Mammary epithelial cell (primary cell): ENCODE measurements at regions of chr12 and their contacts with region 1.

Region 1: DNA sequence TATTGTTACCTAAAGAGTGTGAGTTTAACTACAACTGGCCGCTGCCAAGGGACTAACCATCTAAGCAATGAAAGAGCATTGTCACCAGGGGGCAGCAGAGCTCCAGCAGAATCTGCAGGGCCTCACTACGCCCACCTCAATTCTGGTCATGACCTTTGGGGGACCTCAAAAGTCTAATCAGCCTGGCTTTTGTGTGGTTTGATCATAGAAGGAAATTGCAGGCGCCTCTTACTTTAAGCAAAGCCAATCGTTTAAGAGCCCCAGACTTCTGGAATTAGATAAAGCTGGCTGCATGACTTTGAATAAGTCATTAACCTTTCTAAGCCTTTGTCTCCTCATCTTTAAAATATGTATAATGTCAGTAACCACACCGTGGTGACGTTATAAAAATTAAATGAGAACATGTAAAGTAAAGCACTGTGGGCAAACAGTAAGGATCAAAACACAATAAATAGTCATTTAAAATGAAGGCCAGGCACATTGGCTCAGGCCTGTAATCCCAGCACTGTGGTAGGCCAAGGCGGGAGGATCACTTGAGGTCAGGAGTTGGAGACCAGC is 58.6 kb downstream of the TBX3 start:
- DNase-seq: peak; percentile 26
- H3K4me3 ChIP-seq: no peak overlapping the region
- H3K27ac ChIP-seq: no peak overlapping the region
- H3K4me1 ChIP-seq: peaks cover 3% of the 10 kb centered on the region
- H3K27me3 ChIP-seq: no peaks in the 10 kb centered on the region
- CTCF ChIP-seq: peak; percentile 90 to 93

Region 2: GRCh38 chr12:114368685-114369452 is 256.5 kb before region 1 on chr12:
- CTCF ChIA-PET with region 1: no interaction called
- dilution Hi-C with region 1: no loop called
- in situ Hi-C with region 1: no loop called
- intact Hi-C with region 1: no loop called
- DNase-seq: no peak
- H3K4me3 ChIP-seq: no peak overlapping the region
- H3K27ac ChIP-seq: no peak overlapping the region
- H3K4me1 ChIP-seq: no peaks in the 10 kb centered on the region
- H3K27me3 ChIP-seq: no peaks in the 10 kb centered on the region
- CTCF ChIP-seq: no peak

Region 3: GRCh38 chr12:114611145-114612018 is 14.0 kb before region 1 on chr12:
- CTCF ChIA-PET with region 1: interaction called, 13 read pairs
- dilution Hi-C with region 1: no loop called
- in situ Hi-C with region 1: no loop called
- intact Hi-C with region 1: no loop called
- DNase-seq: no peak
- H3K4me3 ChIP-seq: no peak overlapping the region
- H3K27ac ChIP-seq: no peak overlapping the region
- H3K4me1 ChIP-seq: no peaks in the 10 kb centered on the region
- H3K27me3 ChIP-seq: no peaks in the 10 kb centered on the region
- CTCF ChIP-seq: no peak

Region 4: DNA sequence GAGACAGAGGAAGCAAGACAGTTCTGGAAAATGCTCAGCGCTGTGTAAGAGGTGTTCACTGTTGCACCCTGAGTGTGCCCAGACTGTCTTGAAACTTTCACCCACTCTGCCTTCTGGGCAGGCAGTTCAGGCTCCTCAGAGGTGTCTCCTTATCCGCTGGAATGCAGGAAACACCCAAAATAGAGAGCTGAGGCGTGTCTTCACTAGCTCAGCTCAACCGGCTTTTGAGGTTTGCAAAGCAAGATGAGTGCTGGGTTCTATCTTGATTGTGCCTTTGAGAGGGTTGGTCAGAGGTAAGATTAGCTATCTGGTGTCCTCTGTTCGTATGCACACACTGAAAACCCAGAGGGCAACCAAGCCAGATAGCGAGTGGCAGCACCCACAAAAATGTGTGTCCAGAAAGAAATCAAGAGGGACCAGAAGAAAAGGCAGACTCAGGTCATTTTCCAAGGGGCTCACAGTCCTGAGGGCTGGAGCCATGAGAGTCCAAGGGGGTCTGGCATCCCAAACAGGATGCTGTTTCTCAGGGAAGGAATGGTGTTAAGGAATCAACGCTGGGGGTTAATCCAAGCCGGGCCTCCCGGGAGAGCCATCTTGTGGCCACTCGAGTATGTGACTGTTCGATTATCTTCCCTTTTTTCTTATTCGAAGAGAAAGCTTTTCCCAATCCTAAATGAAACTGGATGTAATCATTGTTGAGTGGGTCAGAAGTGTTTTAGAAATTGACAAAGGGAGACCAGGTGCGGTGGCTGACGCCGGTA is 11.5 kb after region 1 on chr12:
- CTCF ChIA-PET with region 1: interaction called, 3 read pairs
- dilution Hi-C with region 1: no loop called
- in situ Hi-C with region 1: no loop called
- intact Hi-C with region 1: loop called (anchors 1 kb)
- DNase-seq: peak; percentile 56
- H3K4me3 ChIP-seq: no peak overlapping the region
- H3K27ac ChIP-seq: peak overlapping the region; percentile 3
- H3K4me1 ChIP-seq: peaks cover 16% of the 10 kb centered on the region
- H3K27me3 ChIP-seq: no peaks in the 10 kb centered on the region
- CTCF ChIP-seq: peak; percentile 24 to 48

Region 5: DNA sequence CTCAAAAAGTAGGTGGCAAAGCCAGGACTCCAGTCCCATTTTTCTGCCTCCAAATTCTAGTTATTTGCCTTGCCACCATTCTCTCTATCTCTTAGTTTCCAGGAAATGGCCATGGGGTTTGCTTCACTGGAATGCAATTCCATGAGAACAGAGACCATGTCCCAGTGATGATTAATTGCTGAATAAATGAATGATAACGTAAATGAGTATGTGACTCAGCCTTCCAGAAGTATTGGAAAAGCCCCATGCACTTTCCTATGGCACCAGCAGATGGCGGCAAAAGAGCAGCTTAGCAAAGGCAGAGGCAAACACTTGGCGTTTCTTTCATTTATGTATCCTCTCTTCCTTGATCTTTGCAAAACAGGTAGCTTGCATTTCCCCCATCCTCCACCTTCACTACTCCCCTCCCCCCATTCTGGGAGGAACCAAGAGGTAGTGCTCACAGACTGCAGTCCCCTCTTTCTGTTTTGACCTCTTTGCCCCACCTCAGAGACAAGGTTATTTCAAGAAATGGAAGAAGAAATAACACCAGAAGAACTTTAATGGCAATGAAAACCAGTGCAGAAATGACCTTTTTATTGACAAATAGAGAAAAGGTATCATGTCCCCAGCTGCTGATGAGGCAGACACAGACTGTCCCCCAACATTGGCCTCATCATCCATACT is 37.3 kb after region 1 on chr12:
- CTCF ChIA-PET with region 1: no interaction called
- dilution Hi-C with region 1: no loop called
- in situ Hi-C with region 1: no loop called
- intact Hi-C with region 1: loop called (anchors 1 kb)
- DNase-seq: peak; percentile 78
- H3K4me3 ChIP-seq: no peak overlapping the region
- H3K27ac ChIP-seq: no peak overlapping the region
- H3K4me1 ChIP-seq: peaks cover 4% of the 10 kb centered on the region
- H3K27me3 ChIP-seq: no peaks in the 10 kb centered on the region
- CTCF ChIP-seq: peak; percentile 89 to 95

Region 6: DNA sequence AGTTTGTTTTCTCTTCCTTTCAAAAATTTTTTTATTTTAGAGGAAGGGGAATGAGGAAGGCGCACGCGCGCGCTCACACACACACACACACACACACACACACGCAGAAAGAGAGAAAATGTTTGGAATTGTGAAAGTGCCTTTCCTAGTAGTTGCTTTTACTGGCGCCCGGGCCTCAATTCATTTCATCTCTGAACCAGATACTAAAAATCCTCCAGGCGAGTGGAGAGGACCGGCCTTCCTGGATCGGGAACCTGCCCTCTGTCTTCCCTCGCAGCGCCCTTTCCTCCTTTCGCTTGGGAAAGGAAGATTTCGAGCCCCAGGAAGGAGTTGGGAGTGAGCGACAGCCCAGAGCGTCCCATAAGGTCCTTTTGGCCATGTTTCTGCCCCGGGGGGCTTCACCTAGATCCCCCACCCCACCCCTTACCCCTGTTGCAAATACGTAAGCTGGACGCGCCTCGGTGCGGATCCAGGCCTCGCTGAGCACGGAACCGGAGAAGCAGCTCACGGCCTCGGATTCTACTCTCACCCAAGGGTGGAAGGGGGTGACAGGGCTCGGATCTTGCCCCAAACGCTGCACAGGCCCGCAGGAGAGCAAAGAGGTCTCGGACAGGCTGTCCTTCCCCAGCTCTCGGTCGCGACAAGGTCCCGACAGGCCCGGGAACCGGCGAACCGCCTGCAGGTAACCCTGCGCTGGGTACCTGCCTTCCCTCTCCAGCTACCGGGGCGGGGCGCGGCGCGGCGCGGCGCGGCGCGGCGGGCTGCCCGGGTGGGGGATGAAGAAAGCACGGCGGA is 66.6 kb after region 1 on chr12:
- CTCF ChIA-PET with region 1: no interaction called
- dilution Hi-C with region 1: no loop called
- in situ Hi-C with region 1: no loop called
- intact Hi-C with region 1: no loop called
- DNase-seq: peak; percentile 20
- H3K4me3 ChIP-seq: peak overlapping the region; percentile 49 to 59 (median 58)
- H3K27ac ChIP-seq: peak overlapping the region; percentile 26
- H3K4me1 ChIP-seq: peaks cover 9% of the 10 kb centered on the region
- H3K27me3 ChIP-seq: no peaks in the 10 kb centered on the region
- CTCF ChIP-seq: no peak

Region 7: GRCh38 chr12:115632308-115632707 is 1006.9 kb after region 1 on chr12:
- CTCF ChIA-PET with region 1: no interaction called
- dilution Hi-C with region 1: no loop called
- in situ Hi-C with region 1: no loop called
- intact Hi-C with region 1: loop called (anchors 1 kb)
- DNase-seq: peak; percentile 8
- H3K4me3 ChIP-seq: no peak overlapping the region
- H3K27ac ChIP-seq: no peak overlapping the region
- H3K4me1 ChIP-seq: no peaks in the 10 kb centered on the region
- H3K27me3 ChIP-seq: peaks cover 3% of the 10 kb centered on the region
- CTCF ChIP-seq: peak; percentile 23 to 61